ENCODE measurements at regions of chr14 and their contacts with region 1.

Region 1: GRCh38 chr14:70635971-70636595 is 5.6 kb upstream of the TTC9 start:
- DNase-seq: no peak
- ATAC-seq: no peak
- H3K4me3 ChIP-seq: no peak overlapping the region
- H3K27ac ChIP-seq: no peak overlapping the region
- H3K4me1 ChIP-seq: no peaks in the 10 kb centered on the region
- H3K27me3 ChIP-seq: peaks cover 15% of the 10 kb centered on the region
- CTCF ChIP-seq: no peak

Region 2: GRCh38 chr14:70538087-70538486 is 98.0 kb before region 1 on chr14:
- CTCF ChIA-PET with region 1: no interaction called
- POLR2A ChIA-PET with region 1: no interaction called
- in situ Hi-C with region 1: no loop called
- intact Hi-C with region 1: no loop called
- DNase-seq: no peak
- ATAC-seq: no peak
- H3K4me3 ChIP-seq: no peak overlapping the region
- H3K27ac ChIP-seq: no peak overlapping the region
- H3K4me1 ChIP-seq: no peaks in the 10 kb centered on the region
- H3K27me3 ChIP-seq: no peaks in the 10 kb centered on the region
- CTCF ChIP-seq: no peak

Region 3: GRCh38 chr14:70654632-70655031 is 18.5 kb after region 1 on chr14:
- CTCF ChIA-PET with region 1: interaction called, 13 read pairs
- POLR2A ChIA-PET with region 1: no interaction called
- in situ Hi-C with region 1: no loop called
- intact Hi-C with region 1: no loop called
- DNase-seq: no peak
- ATAC-seq: no peak
- H3K4me3 ChIP-seq: no peak overlapping the region
- H3K27ac ChIP-seq: no peak overlapping the region
- H3K4me1 ChIP-seq: no peaks in the 10 kb centered on the region
- H3K27me3 ChIP-seq: no peaks in the 10 kb centered on the region; the same call in 1 of the 2 replicates
- CTCF ChIP-seq: no peak

Region 4: DNA sequence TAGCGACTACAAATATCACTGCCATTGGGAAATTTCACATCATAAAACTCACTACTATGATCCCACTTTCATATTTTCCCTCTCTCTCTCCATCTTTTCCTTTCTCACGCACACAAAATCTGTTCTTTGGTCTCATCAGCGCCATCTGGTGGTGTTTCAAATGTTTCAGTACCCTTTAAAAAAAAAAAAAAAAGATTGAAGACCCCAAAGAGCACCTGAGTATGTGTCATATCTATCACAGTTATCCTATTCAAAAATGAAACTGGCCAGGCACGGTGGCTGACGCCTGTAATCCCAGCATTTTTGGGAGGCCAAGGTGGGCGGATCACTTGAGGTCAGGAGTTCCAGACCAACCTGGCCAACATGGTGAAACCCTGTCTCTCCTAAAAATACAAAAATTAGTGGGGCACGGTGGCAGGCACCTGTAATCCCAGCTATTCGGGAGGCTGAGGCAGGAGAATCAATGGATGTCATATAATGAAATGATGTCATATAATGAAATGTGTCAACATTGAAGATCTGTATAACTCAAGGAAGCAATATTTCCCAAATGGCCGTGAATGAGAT is 78.1 kb after region 1 on chr14:
- CTCF ChIA-PET with region 1: no interaction called
- POLR2A ChIA-PET with region 1: no interaction called
- in situ Hi-C with region 1: no loop called
- intact Hi-C with region 1: no loop called
- DNase-seq: peak; percentile 13
- ATAC-seq: no peak
- H3K4me3 ChIP-seq: no peak overlapping the region
- H3K27ac ChIP-seq: no peak overlapping the region
- H3K4me1 ChIP-seq: no peaks in the 10 kb centered on the region
- H3K27me3 ChIP-seq: no peaks in the 10 kb centered on the region
- CTCF ChIP-seq: peak; percentile 69